ENCODE measurements at regions of chr5 and their contacts with region 1.

Region 1: DNA sequence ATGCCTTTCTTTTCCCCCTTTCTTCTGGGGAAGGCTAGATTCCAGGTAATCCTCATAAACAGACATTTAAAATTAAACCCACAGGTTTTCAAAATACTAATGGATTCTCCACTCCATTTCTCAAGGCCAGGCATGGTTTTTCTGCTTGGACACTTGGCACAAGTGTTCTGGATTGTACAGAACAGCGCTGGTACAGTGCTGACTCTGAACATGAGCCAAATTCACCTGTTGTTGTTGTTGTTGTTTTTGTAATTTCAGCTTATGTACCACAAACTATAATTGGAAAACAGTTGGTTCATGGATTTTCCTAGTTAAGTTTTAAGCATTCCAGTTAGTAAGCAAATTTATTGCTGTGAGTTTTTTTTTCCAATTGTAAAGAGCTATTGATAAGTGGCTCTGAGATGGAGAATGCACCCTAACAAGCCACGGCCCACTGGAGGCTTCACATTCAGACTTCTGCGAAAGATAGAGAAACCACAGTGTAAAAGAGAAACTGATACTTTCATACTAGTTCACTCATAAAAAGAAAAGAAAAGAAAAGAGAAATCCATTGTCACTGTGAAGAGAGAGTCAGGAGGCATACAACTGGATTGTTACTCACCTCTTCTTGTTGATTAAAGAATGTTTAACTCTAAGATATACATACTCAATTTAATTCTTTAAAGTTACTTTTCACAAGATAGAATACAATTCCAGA is 16.2 kb upstream of the ITGA1 start:
- DNase-seq: peak in 4 of 5 donors; percentile 25 to 40 (median 29)
- H3K4me3 ChIP-seq: no peak overlapping the region
- H3K4me3 Mint-ChIP-seq: peak overlapping the region in 7 of 8 donors; percentile 29 to 84 (median 63)
- H3K27ac ChIP-seq: peak overlapping the region; percentile 16
- H3K27ac Mint-ChIP-seq: peak overlapping the region; percentile 24 to 87 (median 81)
- H3K4me1 ChIP-seq: peaks cover 50% of the 10 kb centered on the region
- H3K4me1 Mint-ChIP-seq: peaks cover 31 to 45% (median 42%) of the 10 kb centered on the region in 4 donors
- H3K27me3 ChIP-seq: no peaks in the 10 kb centered on the region
- H3K27me3 Mint-ChIP-seq: peaks cover 0 to 2% of the 10 kb centered on the region in 2 donors

Region 2: DNA sequence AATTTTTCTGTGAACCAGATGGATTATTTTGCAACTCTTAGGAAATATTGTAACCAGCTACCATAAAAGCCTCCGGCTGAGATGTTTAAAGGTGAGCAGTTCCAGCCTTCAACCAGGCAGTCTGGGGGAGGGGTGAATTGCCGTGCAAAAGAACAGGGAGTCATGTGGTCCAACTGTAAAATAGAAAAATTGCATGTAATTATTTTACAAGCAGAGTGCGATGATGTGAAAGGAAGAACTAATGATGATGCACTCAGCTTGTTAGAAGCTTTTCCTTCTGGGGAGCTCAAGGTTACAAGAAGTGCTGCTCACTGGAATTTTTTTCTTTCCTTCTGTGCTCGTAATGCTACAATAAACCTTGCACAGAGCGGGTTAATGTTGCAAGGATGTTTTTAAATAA is 172.5 kb before region 1 on chr5:
- CTCF ChIA-PET with region 1: no interaction called
- POLR2A ChIA-PET with region 1: no interaction called
- intact Hi-C with region 1: no loop called
- DNase-seq: no peak
- H3K4me3 ChIP-seq: no peak overlapping the region
- H3K4me3 Mint-ChIP-seq: no peak overlapping the region
- H3K27ac ChIP-seq: no peak overlapping the region
- H3K27ac Mint-ChIP-seq: no peak overlapping the region
- H3K4me1 ChIP-seq: no peaks in the 10 kb centered on the region
- H3K4me1 Mint-ChIP-seq: peaks cover 0 to 2% (median 0%) of the 10 kb centered on the region in 4 donors
- H3K27me3 ChIP-seq: no peaks in the 10 kb centered on the region
- H3K27me3 Mint-ChIP-seq: peaks cover 0 to 4% of the 10 kb centered on the region in 2 donors

Region 3: GRCh38 chr5:52743970-52744369 is 27.5 kb before region 1 on chr5:
- CTCF ChIA-PET with region 1: interaction called, 8 read pairs
- POLR2A ChIA-PET with region 1: interaction called, 20 read pairs
- intact Hi-C with region 1: no loop called
- DNase-seq: peak; percentile 40 to 59 (median 52)
- H3K4me3 ChIP-seq: no peak overlapping the region
- H3K4me3 Mint-ChIP-seq: peak overlapping the region; percentile 26 to 79 (median 68)
- H3K27ac ChIP-seq: peak overlapping the region; percentile 34
- H3K27ac Mint-ChIP-seq: peak overlapping the region; percentile 45 to 97 (median 90)
- H3K4me1 ChIP-seq: peaks cover 45% of the 10 kb centered on the region
- H3K4me1 Mint-ChIP-seq: peaks cover 40 to 69% (median 49%) of the 10 kb centered on the region in 4 donors
- H3K27me3 ChIP-seq: no peaks in the 10 kb centered on the region
- H3K27me3 Mint-ChIP-seq: no peaks in the 10 kb centered on the region